ENCODE measurements at regions of chr1 and their contacts with region 1.

Region 1: DNA sequence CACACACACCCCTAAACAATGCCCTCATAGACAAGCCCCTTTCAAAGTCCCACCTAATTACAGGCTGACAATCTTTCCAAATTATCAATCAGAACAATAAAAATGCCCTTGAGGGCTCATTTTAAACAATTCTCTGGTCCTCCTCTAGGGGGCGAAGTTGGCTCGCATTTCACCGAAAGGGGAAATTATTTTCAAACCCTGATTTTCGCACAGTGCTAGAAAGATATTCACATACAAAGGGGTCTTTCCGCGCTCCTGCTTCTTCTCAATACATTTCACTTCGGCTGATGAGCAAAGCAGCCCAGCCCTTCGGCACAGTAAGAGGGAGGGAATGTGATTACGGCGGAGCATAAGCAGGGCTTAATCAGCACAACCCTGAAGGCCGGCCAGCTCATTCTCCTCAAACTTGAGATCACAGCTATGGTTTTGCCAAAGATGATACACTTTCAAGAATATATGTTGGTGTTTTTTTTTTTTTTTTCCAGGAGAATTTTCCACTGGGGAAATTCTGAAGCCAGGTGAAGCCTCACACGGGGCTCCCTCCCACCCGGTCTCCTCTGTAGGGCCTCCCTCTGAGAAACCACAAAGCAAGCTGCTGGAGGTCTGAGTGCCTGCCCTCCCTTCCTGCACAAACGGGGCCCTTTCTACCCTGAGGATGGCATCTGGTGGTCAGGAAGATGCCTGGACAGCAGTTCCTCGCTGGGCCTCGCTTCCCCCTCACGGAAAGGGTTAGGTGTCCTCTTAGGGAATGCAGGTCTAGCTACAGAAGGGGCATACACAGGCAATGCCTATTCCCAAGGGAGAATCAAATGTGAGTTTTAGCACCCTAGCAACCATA is 66.9 kb downstream of the GNG12 start:
- DNase-seq: peak in 4 of 5 donors; percentile 22 to 40 (median 32)
- H3K4me3 ChIP-seq: no peak overlapping the region
- H3K4me3 Mint-ChIP-seq: peak overlapping the region; percentile 58 to 78 (median 66)
- H3K27ac ChIP-seq: no peak overlapping the region
- H3K27ac Mint-ChIP-seq: no peak overlapping the region
- H3K4me1 ChIP-seq: peaks cover 3% of the 10 kb centered on the region
- H3K4me1 Mint-ChIP-seq: peaks cover 4 to 5% (median 4%) of the 10 kb centered on the region in 4 donors
- H3K27me3 ChIP-seq: peaks cover 6% of the 10 kb centered on the region
- H3K27me3 Mint-ChIP-seq: peaks cover 22 to 35% of the 10 kb centered on the region in 2 donors

Region 2: GRCh38 chr1:67540733-67541125 is 225.6 kb before region 1 on chr1:
- CTCF ChIA-PET with region 1: interaction called, 84 read pairs
- POLR2A ChIA-PET with region 1: no interaction called
- intact Hi-C with region 1: no loop called
- DNase-seq: no peak
- H3K4me3 ChIP-seq: no peak overlapping the region
- H3K4me3 Mint-ChIP-seq: no peak overlapping the region
- H3K27ac ChIP-seq: no peak overlapping the region
- H3K27ac Mint-ChIP-seq: no peak overlapping the region
- H3K4me1 ChIP-seq: no peaks in the 10 kb centered on the region
- H3K4me1 Mint-ChIP-seq: no peaks in the 10 kb centered on the region
- H3K27me3 ChIP-seq: no peaks in the 10 kb centered on the region
- H3K27me3 Mint-ChIP-seq: no peaks in the 10 kb centered on the region

Region 3: GRCh38 chr1:67561704-67562113 is 204.7 kb before region 1 on chr1:
- CTCF ChIA-PET with region 1: interaction called, 320 read pairs
- POLR2A ChIA-PET with region 1: no interaction called
- intact Hi-C with region 1: no loop called
- DNase-seq: peak; percentile 67 to 72 (median 70)
- H3K4me3 ChIP-seq: no peak overlapping the region
- H3K4me3 Mint-ChIP-seq: no peak overlapping the region
- H3K27ac ChIP-seq: no peak overlapping the region
- H3K27ac Mint-ChIP-seq: no peak overlapping the region
- H3K4me1 ChIP-seq: no peaks in the 10 kb centered on the region
- H3K4me1 Mint-ChIP-seq: peaks cover 0 to 6% (median 2%) of the 10 kb centered on the region in 4 donors
- H3K27me3 ChIP-seq: no peaks in the 10 kb centered on the region
- H3K27me3 Mint-ChIP-seq: peaks cover 3 to 11% of the 10 kb centered on the region in 2 donors

Region 4: GRCh38 chr1:67777016-67777415 is 10.7 kb after region 1 on chr1:
- CTCF ChIA-PET with region 1: interaction called, 21 read pairs
- POLR2A ChIA-PET with region 1: no interaction called
- intact Hi-C with region 1: no loop called
- DNase-seq: no peak
- H3K4me3 ChIP-seq: no peak overlapping the region
- H3K4me3 Mint-ChIP-seq: no peak overlapping the region
- H3K27ac ChIP-seq: no peak overlapping the region
- H3K27ac Mint-ChIP-seq: no peak overlapping the region
- H3K4me1 ChIP-seq: no peaks in the 10 kb centered on the region
- H3K4me1 Mint-ChIP-seq: no peaks in the 10 kb centered on the region
- H3K27me3 ChIP-seq: no peaks in the 10 kb centered on the region
- H3K27me3 Mint-ChIP-seq: peaks cover 14 to 16% of the 10 kb centered on the region in 2 donors

Region 5: DNA sequence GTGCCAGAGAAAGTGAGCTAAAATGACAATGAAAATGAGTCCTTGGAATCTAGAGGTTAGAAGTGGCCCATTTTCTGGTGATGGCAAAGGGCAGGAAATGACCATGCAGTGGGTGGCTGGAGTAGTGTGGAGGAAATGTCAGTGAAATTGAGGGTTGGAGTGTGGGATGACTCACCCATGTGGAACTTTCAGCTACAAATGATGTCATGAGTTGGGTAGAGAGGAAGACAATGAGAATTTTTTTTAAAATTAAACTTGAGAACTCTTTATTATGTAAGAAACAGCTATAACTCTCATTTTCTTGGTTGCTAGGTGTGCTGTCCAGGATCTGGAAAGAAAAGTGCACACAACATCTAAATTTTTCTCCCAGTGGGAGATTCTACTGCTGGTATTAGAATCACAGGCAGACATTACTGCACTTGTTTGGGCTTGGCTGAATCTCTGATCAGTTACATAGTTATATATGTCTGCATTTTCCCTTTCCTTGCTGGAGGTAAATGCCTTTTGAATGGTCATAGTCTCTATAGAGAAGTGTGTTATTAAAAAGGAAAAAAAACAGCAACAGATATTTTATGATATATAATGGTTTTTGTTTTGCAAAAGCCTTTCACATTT is 123.7 kb after region 1 on chr1:
- CTCF ChIA-PET with region 1: no interaction called
- POLR2A ChIA-PET with region 1: no interaction called
- intact Hi-C with region 1: no loop called
- DNase-seq: no peak
- H3K4me3 ChIP-seq: no peak overlapping the region
- H3K4me3 Mint-ChIP-seq: no peak overlapping the region
- H3K27ac ChIP-seq: no peak overlapping the region
- H3K27ac Mint-ChIP-seq: no peak overlapping the region
- H3K4me1 ChIP-seq: no peaks in the 10 kb centered on the region
- H3K4me1 Mint-ChIP-seq: no peaks in the 10 kb centered on the region
- H3K27me3 ChIP-seq: no peaks in the 10 kb centered on the region
- H3K27me3 Mint-ChIP-seq: peaks cover 6 to 7% of the 10 kb centered on the region in 2 donors

Measured in CD4-positive, alpha-beta memory T cell (primary cell).